Activated naive CD4-positive, alpha-beta T cell treated with anti-CD3 and anti-CD28 coated beads for 36 hours (primary cell): ENCODE measurements at regions of chr7 and their contacts with region 1.

Region 1: GRCh38 chr7:127392566-127393367 is at the start of gene ZNF800:
- DNase-seq: peak; percentile 89
- H3K4me3 Mint-ChIP-seq: peak within 1 kb of the TSS; percentile 95
- H3K27ac Mint-ChIP-seq: peak within 1 kb of the TSS; percentile 93
- H3K4me1 Mint-ChIP-seq: peaks cover 61% of the 10 kb centered on the region
- H3K27me3 Mint-ChIP-seq: no peaks in the 10 kb centered on the region
- total RNA-seq, gene ZNF800: 18.2 to 19.5 TPM

Region 2: DNA sequence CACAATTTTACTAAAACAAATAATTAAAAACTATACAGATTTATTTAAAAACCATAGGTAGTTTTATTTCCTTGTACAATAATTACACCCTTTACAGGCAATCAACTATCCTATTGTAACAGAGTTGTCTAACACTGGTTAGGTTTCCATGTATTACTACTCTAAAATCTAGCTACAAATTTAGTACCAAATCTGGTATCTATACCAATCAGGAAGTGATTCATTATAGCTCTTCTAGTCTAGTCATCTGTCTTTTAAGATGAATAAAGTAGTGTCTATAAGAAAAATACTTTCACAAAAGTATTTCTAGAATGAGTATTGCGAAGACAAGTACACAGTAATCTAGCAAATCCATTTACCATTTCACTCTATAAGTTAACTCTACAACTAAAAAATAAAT is 17.1 kb before region 1 on chr7:
- CTCF ChIA-PET with region 1: no interaction called
- intact Hi-C with region 1: loop called (anchors 1 kb)
- DNase-seq: no peak
- H3K4me3 Mint-ChIP-seq: no peak overlapping the region
- H3K27ac Mint-ChIP-seq: no peak overlapping the region
- H3K4me1 Mint-ChIP-seq: peaks cover 53% of the 10 kb centered on the region
- H3K27me3 Mint-ChIP-seq: no peaks in the 10 kb centered on the region

Region 3: GRCh38 chr7:127382301-127383085 is 10.3 kb before region 1 on chr7:
- CTCF ChIA-PET with region 1: interaction called, 3 read pairs
- intact Hi-C with region 1: loop called (anchors 1 kb)
- DNase-seq: no peak
- H3K4me3 Mint-ChIP-seq: no peak overlapping the region
- H3K27ac Mint-ChIP-seq: no peak overlapping the region
- H3K4me1 Mint-ChIP-seq: peaks cover 64% of the 10 kb centered on the region
- H3K27me3 Mint-ChIP-seq: no peaks in the 10 kb centered on the region

Region 4: DNA sequence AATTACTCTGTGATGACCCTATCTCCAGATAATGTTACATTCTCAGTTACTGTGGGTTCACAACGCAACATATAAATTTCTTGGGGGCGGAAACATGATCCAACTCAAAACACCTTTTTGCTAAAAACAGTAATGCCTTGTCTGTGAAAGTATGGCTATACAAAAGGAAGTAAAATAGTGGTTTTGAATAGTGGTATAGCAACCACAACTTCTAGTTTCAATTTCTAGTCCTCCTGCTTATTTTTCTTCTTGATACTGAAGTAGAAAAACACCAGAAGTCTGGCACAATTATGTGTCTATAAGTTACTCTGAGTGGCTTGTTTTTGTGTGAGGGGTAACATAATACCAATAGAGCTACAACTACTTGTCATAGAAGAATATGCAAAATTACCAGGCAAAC is 21.2 kb after region 1 on chr7:
- CTCF ChIA-PET with region 1: no interaction called
- intact Hi-C with region 1: no loop called
- DNase-seq: no peak
- H3K4me3 Mint-ChIP-seq: no peak overlapping the region
- H3K27ac Mint-ChIP-seq: no peak overlapping the region
- H3K4me1 Mint-ChIP-seq: peaks cover 54% of the 10 kb centered on the region
- H3K27me3 Mint-ChIP-seq: no peaks in the 10 kb centered on the region

Region 5: GRCh38 chr7:127585044-127585953 is 192.5 kb after region 1 on chr7 and contains the start of gene GCC1:
- CTCF ChIA-PET with region 1: interaction called, 3 read pairs
- intact Hi-C with region 1: loop called (anchors 1 kb)
- DNase-seq: peak; percentile 94
- H3K4me3 Mint-ChIP-seq: peak within 1 kb of the TSS; percentile 89
- H3K27ac Mint-ChIP-seq: peak within 1 kb of the TSS; percentile 70
- H3K4me1 Mint-ChIP-seq: peaks cover 66% of the 10 kb centered on the region
- H3K27me3 Mint-ChIP-seq: no peaks in the 10 kb centered on the region
- total RNA-seq, gene GCC1: 11.0 to 12.0 TPM